ENCODE measurements at regions of chr5 and their contacts with region 1.

Region 1: GRCh38 chr5:113606298-113607134 is 93.0 kb downstream of the YTHDC2 start:
- DNase-seq: peak; percentile 52
- ATAC-seq: peak; percentile 93
- H3K4me3 Mint-ChIP-seq: no peak overlapping the region
- H3K27ac Mint-ChIP-seq: no peak overlapping the region
- H3K4me1 Mint-ChIP-seq: no peaks in the 10 kb centered on the region
- H3K27me3 Mint-ChIP-seq: peaks cover 10% of the 10 kb centered on the region

Region 2: DNA sequence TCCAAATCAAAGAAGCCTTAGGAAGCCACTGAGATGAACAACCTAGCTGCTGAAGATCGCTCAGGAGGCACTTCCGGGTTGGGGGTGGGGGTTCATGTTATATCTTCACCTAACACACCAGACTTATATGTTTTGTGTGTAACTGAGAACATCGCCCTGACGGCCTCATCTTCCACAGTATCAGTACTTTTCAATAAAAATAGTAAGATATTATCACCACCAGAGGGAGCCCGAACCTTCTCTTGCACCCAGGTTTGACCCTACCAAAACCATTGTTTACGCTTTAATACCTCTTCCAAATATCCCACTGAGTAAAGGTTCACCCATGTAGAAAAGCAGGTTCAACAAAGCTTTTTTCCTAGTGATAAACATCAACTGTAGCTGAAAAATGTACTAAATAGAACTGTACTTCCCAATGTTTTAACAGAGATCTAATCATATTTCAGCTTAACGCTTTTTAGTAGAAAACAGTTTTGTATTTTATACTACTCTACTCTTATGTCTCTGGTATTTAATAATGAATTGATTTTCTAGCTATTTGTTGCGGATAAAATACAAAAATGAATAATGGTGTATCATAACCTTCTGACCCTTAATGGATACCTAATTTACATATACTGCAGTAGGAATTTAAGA is 1431.4 kb before region 1 on chr5:
- CTCF ChIA-PET with region 1: interaction called, 5 read pairs
- POLR2A ChIA-PET with region 1: no interaction called
- intact Hi-C with region 1: loop called in 1 of 2 experiments (anchors 5 kb)
- DNase-seq: peak; percentile 58
- ATAC-seq: peak; percentile 84
- H3K4me3 Mint-ChIP-seq: no peak overlapping the region
- H3K27ac Mint-ChIP-seq: no peak overlapping the region
- H3K4me1 Mint-ChIP-seq: peaks cover 1% of the 10 kb centered on the region
- H3K27me3 Mint-ChIP-seq: peaks cover 6% of the 10 kb centered on the region

Region 3: GRCh38 chr5:112551419-112552032 is 1055.0 kb before region 1 on chr5:
- CTCF ChIA-PET with region 1: no interaction called
- POLR2A ChIA-PET with region 1: no interaction called
- intact Hi-C with region 1: loop called in 1 of 2 experiments (anchors 5 kb)
- DNase-seq: peak; percentile 37
- ATAC-seq: peak; percentile 47
- H3K4me3 Mint-ChIP-seq: no peak overlapping the region
- H3K27ac Mint-ChIP-seq: no peak overlapping the region
- H3K4me1 Mint-ChIP-seq: no peaks in the 10 kb centered on the region
- H3K27me3 Mint-ChIP-seq: no peaks in the 10 kb centered on the region

Region 4: GRCh38 chr5:112995764-112996618 is 610.5 kb before region 1 on chr5:
- CTCF ChIA-PET with region 1: interaction called, 27 read pairs
- POLR2A ChIA-PET with region 1: no interaction called
- intact Hi-C with region 1: loop called (anchors 1 to 5 kb)
- DNase-seq: peak; percentile 84
- ATAC-seq: peak; percentile 71
- H3K4me3 Mint-ChIP-seq: no peak overlapping the region
- H3K27ac Mint-ChIP-seq: no peak overlapping the region
- H3K4me1 Mint-ChIP-seq: peaks cover 17% of the 10 kb centered on the region
- H3K27me3 Mint-ChIP-seq: no peaks in the 10 kb centered on the region

Region 5: GRCh38 chr5:113140837-113141661 is 465.5 kb before region 1 on chr5:
- CTCF ChIA-PET with region 1: no interaction called
- POLR2A ChIA-PET with region 1: no interaction called
- intact Hi-C with region 1: no loop called
- DNase-seq: no peak
- ATAC-seq: no peak
- H3K4me3 Mint-ChIP-seq: no peak overlapping the region
- H3K27ac Mint-ChIP-seq: no peak overlapping the region
- H3K4me1 Mint-ChIP-seq: no peaks in the 10 kb centered on the region
- H3K27me3 Mint-ChIP-seq: no peaks in the 10 kb centered on the region

Region 6: DNA sequence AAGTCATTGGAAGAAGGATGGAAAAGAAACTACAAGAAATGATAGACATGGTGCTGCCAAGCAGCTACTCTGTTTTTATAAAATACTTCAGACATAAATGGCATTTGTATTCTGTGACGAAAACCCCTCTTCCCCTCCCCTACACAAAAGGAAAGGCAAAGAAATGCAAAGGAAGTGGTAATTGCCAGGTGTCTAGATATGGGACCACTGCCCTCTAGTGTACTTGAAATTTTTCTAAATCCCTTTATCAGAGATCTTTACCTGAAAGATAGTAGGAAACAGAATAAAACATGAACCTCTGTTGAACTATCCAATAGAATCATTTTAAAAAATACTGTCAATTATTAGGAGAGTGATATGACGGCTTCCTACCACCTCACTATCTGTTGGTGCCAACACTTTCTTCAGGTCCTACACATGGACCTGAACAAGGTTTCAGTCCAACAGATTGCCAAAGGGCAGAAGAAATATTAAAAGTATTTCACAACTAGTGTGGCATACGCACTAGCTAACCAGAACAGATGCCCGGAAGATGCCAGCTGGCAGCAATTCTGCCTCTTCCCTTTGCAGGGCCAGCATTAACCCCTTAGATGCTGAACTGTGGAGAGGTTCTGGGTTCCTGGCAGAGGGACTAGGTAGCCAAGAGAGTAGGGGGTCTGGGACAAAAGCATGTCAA is 275.8 kb before region 1 on chr5:
- CTCF ChIA-PET with region 1: interaction called, 5 read pairs
- POLR2A ChIA-PET with region 1: no interaction called
- intact Hi-C with region 1: loop called (anchors 1 kb)
- DNase-seq: peak; percentile 13
- ATAC-seq: peak; percentile 78
- H3K4me3 Mint-ChIP-seq: no peak overlapping the region
- H3K27ac Mint-ChIP-seq: peak overlapping the region; percentile 17
- H3K4me1 Mint-ChIP-seq: peaks cover 11% of the 10 kb centered on the region
- H3K27me3 Mint-ChIP-seq: no peaks in the 10 kb centered on the region

Region 7: DNA sequence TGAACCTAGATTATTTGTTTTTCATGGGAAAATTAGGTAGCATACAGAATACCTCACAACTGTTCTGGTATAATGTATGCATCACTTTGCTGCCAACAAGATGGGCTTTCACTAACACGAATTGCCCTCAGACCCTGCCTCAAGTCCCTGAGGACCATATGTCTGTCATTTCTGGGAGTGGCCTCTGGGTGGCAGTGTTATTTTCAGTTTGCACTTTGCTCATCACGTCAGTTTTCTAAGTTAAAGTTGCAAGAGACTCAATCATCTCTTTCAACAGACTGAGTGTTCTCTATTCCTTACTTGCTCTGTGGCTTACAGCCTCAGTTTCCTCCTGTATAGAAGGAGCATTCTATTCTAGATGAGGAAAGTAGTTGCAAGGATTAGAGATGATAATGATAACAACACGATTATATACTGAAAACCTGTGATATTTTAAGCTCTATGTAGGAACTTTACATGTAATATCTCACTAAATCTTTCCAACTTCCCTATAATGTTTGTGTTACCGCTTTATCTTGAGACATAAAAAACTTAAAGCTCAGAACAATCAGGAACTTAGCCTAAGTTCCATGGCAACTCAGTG is 227.5 kb before region 1 on chr5:
- CTCF ChIA-PET with region 1: interaction called, 11 read pairs
- POLR2A ChIA-PET with region 1: no interaction called
- intact Hi-C with region 1: loop called (anchors 1 kb)
- DNase-seq: peak; percentile 75
- ATAC-seq: peak; percentile 74
- H3K4me3 Mint-ChIP-seq: no peak overlapping the region
- H3K27ac Mint-ChIP-seq: no peak overlapping the region
- H3K4me1 Mint-ChIP-seq: peaks cover 31% of the 10 kb centered on the region
- H3K27me3 Mint-ChIP-seq: peaks cover 15% of the 10 kb centered on the region

Region 8: GRCh38 chr5:113806250-113806649 is 199.7 kb after region 1 on chr5:
- CTCF ChIA-PET with region 1: no interaction called
- POLR2A ChIA-PET with region 1: no interaction called
- intact Hi-C with region 1: no loop called
- DNase-seq: no peak
- ATAC-seq: no peak
- H3K4me3 Mint-ChIP-seq: no peak overlapping the region
- H3K27ac Mint-ChIP-seq: no peak overlapping the region
- H3K4me1 Mint-ChIP-seq: no peaks in the 10 kb centered on the region
- H3K27me3 Mint-ChIP-seq: peaks cover 4% of the 10 kb centered on the region

Region 9: GRCh38 chr5:114449860-114450421 is 843.4 kb after region 1 on chr5:
- CTCF ChIA-PET with region 1: interaction called, 25 read pairs
- POLR2A ChIA-PET with region 1: no interaction called
- intact Hi-C with region 1: loop called in 1 of 2 experiments (anchors 2 kb)
- DNase-seq: peak; percentile 76
- ATAC-seq: peak; percentile 92
- H3K4me3 Mint-ChIP-seq: no peak overlapping the region
- H3K27ac Mint-ChIP-seq: no peak overlapping the region
- H3K4me1 Mint-ChIP-seq: peaks cover 2% of the 10 kb centered on the region
- H3K27me3 Mint-ChIP-seq: peaks cover 7% of the 10 kb centered on the region

Measured in activated CD4-positive, alpha-beta T cell treated with anti-CD3 and anti-CD28 coated beads for 36 hours (primary cell).